ENCODE measurements at regions of chr13 and their contacts with region 1.

Region 1: DNA sequence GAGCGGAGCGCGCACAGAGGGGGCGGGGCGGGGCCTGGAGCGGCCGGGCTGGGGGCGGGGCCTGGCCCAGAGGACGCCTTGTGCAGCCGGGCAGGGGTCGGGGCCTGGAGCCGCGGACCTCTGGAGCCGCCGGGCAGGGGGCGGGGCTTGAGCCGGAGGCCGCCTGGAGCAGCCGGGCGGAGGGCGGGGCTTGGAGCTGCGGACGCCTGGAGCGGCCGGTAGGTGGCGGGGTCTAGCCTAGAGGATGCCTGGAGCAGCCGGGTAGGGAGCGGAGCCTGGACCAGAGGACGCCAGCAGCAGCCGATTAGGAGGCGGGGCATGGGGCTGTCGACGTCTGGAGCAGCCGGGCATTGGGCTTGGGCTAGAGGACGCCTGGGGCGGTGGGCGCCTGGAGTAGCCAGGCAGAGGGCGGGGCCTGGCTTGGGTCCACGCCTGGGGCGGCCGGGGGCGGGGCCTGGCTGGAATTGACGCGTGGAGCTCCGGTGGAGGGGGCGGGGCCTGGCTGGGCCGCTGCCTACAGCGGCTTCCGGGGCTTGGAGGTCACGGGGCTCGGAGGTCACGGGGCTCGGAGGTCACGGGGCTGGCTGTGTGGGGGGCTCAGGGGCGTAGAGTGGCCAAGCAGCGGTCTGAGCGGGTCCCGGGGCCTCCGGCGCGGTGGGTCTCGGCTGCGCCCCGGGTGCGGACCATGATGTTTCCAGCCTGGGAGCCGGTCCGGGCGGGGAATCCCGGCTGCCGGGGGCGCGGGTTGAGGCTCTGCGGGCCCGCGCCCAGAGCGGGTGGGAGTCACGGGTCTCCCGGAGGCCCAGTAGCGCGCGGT is at the start of gene ANKRD10:
- DNase-seq: peak; percentile 98
- ATAC-seq: peak; percentile 84
- H3K4me3 Mint-ChIP-seq: peak within 1 kb of the TSS; percentile 92
- H3K27ac Mint-ChIP-seq: peak within 1 kb of the TSS; percentile 93
- H3K4me1 Mint-ChIP-seq: peaks cover 39% of the 10 kb centered on the region
- H3K27me3 Mint-ChIP-seq: no peaks in the 10 kb centered on the region
- total RNA-seq, gene ANKRD10: 65.1 to 91.8 TPM

Region 2: DNA sequence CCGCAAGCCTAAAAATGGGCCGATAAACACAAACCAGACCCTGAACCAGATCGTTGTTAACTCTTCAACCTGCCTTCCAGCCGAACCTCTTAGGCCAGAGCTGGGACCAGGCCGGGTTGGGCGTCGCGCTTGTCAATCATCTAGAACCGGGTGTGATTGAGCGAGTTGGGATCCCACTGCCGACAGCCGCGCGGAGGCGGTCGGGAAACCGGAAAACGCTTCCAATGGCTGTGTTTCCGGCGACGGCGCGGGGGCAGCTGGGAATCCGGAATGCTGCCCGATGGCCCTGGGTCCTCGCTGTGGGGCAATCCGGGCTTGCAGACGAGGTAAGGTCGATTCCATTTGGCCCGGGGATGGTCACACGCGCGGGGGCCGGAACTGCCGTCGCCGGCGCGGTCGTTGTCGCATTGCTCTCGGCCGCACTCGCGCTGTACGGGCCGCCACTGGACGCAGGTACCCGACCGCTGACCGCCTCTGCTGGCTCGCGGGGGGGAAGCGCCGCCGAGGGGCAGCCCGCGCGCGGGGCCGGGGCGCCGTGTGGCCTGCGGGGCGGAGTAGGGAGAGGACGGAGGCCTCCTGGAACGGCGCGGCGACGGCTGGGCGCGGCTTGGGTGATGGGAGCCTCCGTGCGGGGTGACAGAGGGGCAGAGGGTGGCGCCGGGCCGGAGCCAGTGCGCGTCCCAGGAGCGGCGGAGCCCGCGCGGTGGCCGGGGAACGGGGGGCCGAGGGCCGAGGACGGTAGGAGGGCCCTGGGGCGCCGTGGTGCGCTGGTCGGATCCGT is 299.8 kb before region 1 on chr13 and contains the start of gene NAXD:
- CTCF ChIA-PET with region 1: no interaction called
- POLR2A ChIA-PET with region 1: no interaction called
- intact Hi-C with region 1: loop called in 1 of 2 experiments (anchors 1 kb)
- DNase-seq: peak; percentile 92
- ATAC-seq: peak; percentile 94
- H3K4me3 Mint-ChIP-seq: peak within 1 kb of the TSS; percentile 88
- H3K27ac Mint-ChIP-seq: peak within 1 kb of the TSS; percentile 96
- H3K4me1 Mint-ChIP-seq: peaks cover 41% of the 10 kb centered on the region
- H3K27me3 Mint-ChIP-seq: no peaks in the 10 kb centered on the region
- total RNA-seq, gene NAXD: 19.6 to 23.3 TPM

Region 3: DNA sequence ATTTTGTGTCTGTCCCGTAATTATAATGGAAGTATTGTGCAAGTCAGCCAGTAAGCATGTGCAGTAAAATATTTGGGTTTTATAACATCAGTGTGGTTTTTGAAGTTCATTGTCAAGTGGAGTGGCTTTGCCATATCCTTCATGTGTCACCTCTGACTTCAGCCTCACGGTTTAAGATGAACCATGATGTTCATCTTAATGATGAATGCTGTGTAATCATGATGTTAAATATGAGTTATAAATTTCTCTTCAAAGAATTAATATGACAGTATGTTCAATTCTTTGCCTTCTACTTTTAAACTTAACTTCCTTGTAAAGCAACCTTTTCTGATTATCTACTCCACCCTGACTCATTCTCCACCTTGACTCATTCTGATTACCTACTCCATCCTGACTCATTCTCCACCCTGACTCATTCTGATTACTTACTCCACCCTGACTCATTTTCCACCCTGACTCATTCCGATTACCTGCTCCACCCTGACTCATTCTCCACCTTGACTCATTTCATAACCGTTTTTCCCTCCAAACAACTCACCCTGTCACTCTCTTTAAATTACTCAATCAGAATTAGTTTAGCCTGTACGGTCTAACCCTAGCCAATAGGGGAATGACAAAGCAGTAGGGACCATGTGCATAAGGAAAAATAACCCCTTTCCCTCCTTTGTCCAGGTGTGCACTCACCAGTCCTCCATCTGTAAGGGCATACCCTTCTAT is 49.9 kb after region 1 on chr13:
- CTCF ChIA-PET with region 1: interaction called, 3 read pairs
- POLR2A ChIA-PET with region 1: no interaction called
- intact Hi-C with region 1: loop called (anchors 1 kb)
- DNase-seq: peak; percentile 55
- ATAC-seq: peak; percentile 92
- H3K4me3 Mint-ChIP-seq: peak overlapping the region; percentile 39
- H3K27ac Mint-ChIP-seq: peak overlapping the region; percentile 78
- H3K4me1 Mint-ChIP-seq: peaks cover 18% of the 10 kb centered on the region
- H3K27me3 Mint-ChIP-seq: peaks cover 8% of the 10 kb centered on the region

Region 4: GRCh38 chr13:111066544-111066943 is 151.3 kb after region 1 on chr13:
- CTCF ChIA-PET with region 1: interaction called, 4 read pairs
- POLR2A ChIA-PET with region 1: interaction called, 9 read pairs
- intact Hi-C with region 1: loop called in 1 of 2 experiments (anchors 1 kb)
- DNase-seq: no peak
- ATAC-seq: no peak
- H3K4me3 Mint-ChIP-seq: peak overlapping the region; percentile 34
- H3K27ac Mint-ChIP-seq: no peak overlapping the region
- H3K4me1 Mint-ChIP-seq: peaks cover 4% of the 10 kb centered on the region
- H3K27me3 Mint-ChIP-seq: peaks cover 44% of the 10 kb centered on the region

Region 5: GRCh38 chr13:112587212-112587763 is 1672.0 kb after region 1 on chr13:
- CTCF ChIA-PET with region 1: no interaction called
- POLR2A ChIA-PET with region 1: no interaction called
- intact Hi-C with region 1: loop called in 1 of 2 experiments (anchors 5 kb)
- DNase-seq: peak; percentile 84
- ATAC-seq: peak; percentile 79
- H3K4me3 Mint-ChIP-seq: peak overlapping the region; percentile 96
- H3K27ac Mint-ChIP-seq: peak overlapping the region; percentile 97
- H3K4me1 Mint-ChIP-seq: peaks cover 46% of the 10 kb centered on the region
- H3K27me3 Mint-ChIP-seq: no peaks in the 10 kb centered on the region